B cell (primary cell): ENCODE measurements at regions of chr4 and their contacts with region 1.

Region 1: GRCh38 chr4:6709230-6710114 is at the start of gene MRFAP1L1:
- DNase-seq: peak; percentile 97
- ATAC-seq: peak; percentile 83
- H3K4me3 ChIP-seq: peak within 1 kb of the TSS; percentile 72 to 90 (median 77)
- H3K4me3 Mint-ChIP-seq: peak within 1 kb of the TSS; percentile 99
- H3K27ac ChIP-seq: peak within 1 kb of the TSS; percentile 80 to 83
- H3K27ac Mint-ChIP-seq: peak within 1 kb of the TSS; percentile 98
- H3K4me1 ChIP-seq: peaks cover 32 to 36% of the 10 kb centered on the region in 2 donors
- H3K4me1 Mint-ChIP-seq: peaks cover 57% of the 10 kb centered on the region
- H3K27me3 ChIP-seq: no peaks in the 10 kb centered on the region
- H3K27me3 Mint-ChIP-seq: no peaks in the 10 kb centered on the region
- CTCF ChIP-seq: no peak
- total RNA-seq, gene MRFAP1L1: 53.8 and 57.2 TPM in 2 replicates

Region 2: GRCh38 chr4:6574747-6575502 is 134.5 kb before region 1 on chr4 and contains the start of gene MAN2B2:
- CTCF ChIA-PET with region 1: no interaction called
- POLR2A ChIA-PET with region 1: no interaction called
- intact Hi-C with region 1: loop called (anchors 2 kb)
- DNase-seq: peak; percentile 82
- ATAC-seq: peak; percentile 96
- H3K4me3 ChIP-seq: peak within 1 kb of the TSS; percentile 67 to 92 (median 82)
- H3K4me3 Mint-ChIP-seq: peak within 1 kb of the TSS; percentile 90
- H3K27ac ChIP-seq: peak within 1 kb of the TSS; percentile 64 to 83
- H3K27ac Mint-ChIP-seq: peak within 1 kb of the TSS; percentile 89
- H3K4me1 ChIP-seq: peaks cover 9 to 19% of the 10 kb centered on the region in 2 donors
- H3K4me1 Mint-ChIP-seq: peaks cover 16% of the 10 kb centered on the region
- H3K27me3 ChIP-seq: peaks cover 0 to 2% (median 0%) of the 10 kb centered on the region in 4 experiments
- H3K27me3 Mint-ChIP-seq: no peaks in the 10 kb centered on the region
- CTCF ChIP-seq: no peak
- total RNA-seq, gene MAN2B2: 37.0 TPM in 2 replicates

Region 3: GRCh38 chr4:6658597-6659075 is 50.8 kb before region 1 on chr4:
- CTCF ChIA-PET with region 1: no interaction called
- POLR2A ChIA-PET with region 1: no interaction called
- intact Hi-C with region 1: no loop called
- DNase-seq: peak; percentile 61
- ATAC-seq: peak; percentile 64
- H3K4me3 ChIP-seq: peak overlapping the region in 3 of 5 experiments; percentile 25 to 57 (median 44)
- H3K4me3 Mint-ChIP-seq: peak overlapping the region; percentile 74
- H3K27ac ChIP-seq: no peak overlapping the region
- H3K27ac Mint-ChIP-seq: no peak overlapping the region
- H3K4me1 ChIP-seq: peaks cover 11 to 12% of the 10 kb centered on the region in 2 donors
- H3K4me1 Mint-ChIP-seq: peaks cover 2% of the 10 kb centered on the region
- H3K27me3 ChIP-seq: peaks cover 0 to 39% (median 17%) of the 10 kb centered on the region in 4 experiments
- H3K27me3 Mint-ChIP-seq: peaks cover 31% of the 10 kb centered on the region
- CTCF ChIP-seq: no peak

Region 4: GRCh38 chr4:6673660-6674499 is 35.6 kb before region 1 on chr4:
- CTCF ChIA-PET with region 1: interaction called, 4 read pairs
- POLR2A ChIA-PET with region 1: interaction called, 6 read pairs
- intact Hi-C with region 1: loop called (anchors 1 kb)
- DNase-seq: peak; percentile 97
- ATAC-seq: peak; percentile 89
- H3K4me3 ChIP-seq: peak overlapping the region; percentile 22 to 82 (median 63)
- H3K4me3 Mint-ChIP-seq: peak overlapping the region; percentile 91
- H3K27ac ChIP-seq: peak overlapping the region; percentile 67 to 71
- H3K27ac Mint-ChIP-seq: peak overlapping the region; percentile 99
- H3K4me1 ChIP-seq: peaks cover 27 to 35% of the 10 kb centered on the region in 2 donors
- H3K4me1 Mint-ChIP-seq: peaks cover 43% of the 10 kb centered on the region
- H3K27me3 ChIP-seq: no peaks in the 10 kb centered on the region
- H3K27me3 Mint-ChIP-seq: no peaks in the 10 kb centered on the region
- CTCF ChIP-seq: no peak